ENCODE measurements at regions of chr4 and their contacts with region 1.

Region 1: DNA sequence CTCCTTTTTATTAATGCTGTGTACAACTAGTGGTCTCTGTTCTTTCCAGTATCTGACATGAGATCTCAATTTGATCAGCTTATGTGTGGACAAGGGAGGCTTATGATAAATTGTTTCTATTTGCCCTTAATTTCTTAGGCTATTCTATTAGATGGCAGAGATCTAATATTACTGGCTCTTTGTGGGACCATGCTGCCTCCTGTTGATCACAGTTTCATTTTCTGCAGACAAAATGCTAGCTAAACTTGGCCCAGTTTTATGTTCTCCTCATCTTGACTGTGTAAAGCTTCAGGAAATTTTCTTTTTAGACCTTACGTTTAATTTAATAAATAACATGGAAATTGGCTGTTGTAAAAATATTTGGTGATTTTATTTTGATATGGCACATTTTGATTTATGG is 627.1 kb upstream of the AADAT start:
- DNase-seq: no peak
- ATAC-seq: no peak
- H3K4me3 ChIP-seq: no peak overlapping the region
- H3K27ac ChIP-seq: no peak overlapping the region
- H3K4me1 ChIP-seq: no peaks in the 10 kb centered on the region
- H3K27me3 ChIP-seq: no peaks in the 10 kb centered on the region
- CTCF ChIP-seq: no peak
- POLR2A ChIP-seq: no peak
- RAD21 ChIP-seq: peak; percentile 6; the same call in 1 of the 2 replicates

Region 2: GRCh38 chr4:170307182-170307581 is 409.7 kb before region 1 on chr4:
- CTCF ChIA-PET with region 1: no interaction called
- POLR2A ChIA-PET with region 1: no interaction called
- dilution Hi-C with region 1: no loop called
- in situ Hi-C with region 1: no loop called
- intact Hi-C with region 1: loop called (anchors 5 kb)
- DNase-seq: no peak
- ATAC-seq: no peak
- H3K4me3 ChIP-seq: no peak overlapping the region
- H3K27ac ChIP-seq: no peak overlapping the region
- H3K4me1 ChIP-seq: no peaks in the 10 kb centered on the region
- H3K27me3 ChIP-seq: no peaks in the 10 kb centered on the region
- CTCF ChIP-seq: no peak
- POLR2A ChIP-seq: no peak
- RAD21 ChIP-seq: no peak

Measured in IMR-90 (cell line).